A673 (cell line): ENCODE measurements at regions of chr12 and their contacts with region 1.

Region 1: DNA sequence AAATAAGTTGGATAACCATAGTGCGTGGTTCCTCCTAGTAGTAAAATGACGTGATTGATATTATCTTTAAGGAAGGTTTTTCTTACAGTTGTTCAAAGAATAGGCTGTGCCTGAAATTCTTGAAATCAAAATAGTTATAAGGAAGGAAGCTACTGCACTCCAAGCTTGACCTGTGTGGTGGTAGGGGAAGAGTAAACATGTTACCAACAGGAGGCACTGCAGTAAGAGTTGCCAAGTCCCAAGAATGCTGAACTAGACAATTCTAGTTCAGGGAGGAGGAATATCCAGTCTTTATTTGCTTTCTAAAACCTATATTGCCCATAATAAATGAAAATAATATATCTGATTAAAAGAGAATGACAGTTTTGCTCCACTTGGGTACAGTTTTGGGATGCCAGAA is 764.5 kb downstream of the TMTC2 start:
- DNase-seq: no peak
- H3K4me3 ChIP-seq: no peak overlapping the region
- H3K27ac ChIP-seq: no peak overlapping the region
- H3K4me1 ChIP-seq: no peaks in the 10 kb centered on the region
- H3K27me3 ChIP-seq: no peaks in the 10 kb centered on the region
- CTCF ChIP-seq: no peak

Region 2: DNA sequence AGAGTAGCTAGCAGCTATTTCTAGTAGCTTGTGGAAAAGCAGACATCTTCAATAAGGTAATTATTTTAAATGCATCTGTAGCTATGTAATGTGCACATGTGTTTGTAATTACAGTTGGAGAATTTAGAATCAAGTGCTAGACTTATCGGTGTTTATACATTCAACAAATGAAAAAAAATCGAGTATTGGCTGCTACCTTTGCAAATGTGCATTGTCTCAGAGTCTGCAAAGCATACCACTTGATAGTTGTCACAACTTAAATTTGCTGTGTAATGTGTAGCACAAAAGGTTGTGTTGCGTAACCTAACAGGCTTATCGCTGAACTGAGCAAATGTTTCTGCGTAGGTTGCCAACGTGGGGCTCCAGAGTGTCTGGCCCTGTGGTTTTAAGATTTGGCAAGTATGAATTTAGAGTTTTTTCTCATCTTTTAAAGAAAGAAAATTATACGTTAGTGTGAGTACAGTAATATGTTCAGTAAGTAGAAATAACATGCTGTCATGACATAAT is 720.2 kb before region 1 on chr12:
- CTCF ChIA-PET with region 1: no interaction called
- POLR2A ChIA-PET with region 1: interaction called, 14 read pairs
- intact Hi-C with region 1: no loop called
- DNase-seq: peak; percentile 82
- H3K4me3 ChIP-seq: no peak overlapping the region
- H3K27ac ChIP-seq: peak overlapping the region; percentile 21
- H3K4me1 ChIP-seq: peaks cover 23% of the 10 kb centered on the region
- H3K27me3 ChIP-seq: no peaks in the 10 kb centered on the region
- CTCF ChIP-seq: no peak

Region 3: GRCh38 chr12:83322809-83323208 is 128.4 kb before region 1 on chr12:
- CTCF ChIA-PET with region 1: no interaction called
- POLR2A ChIA-PET with region 1: no interaction called
- intact Hi-C with region 1: no loop called
- DNase-seq: peak; percentile 18
- H3K4me3 ChIP-seq: no peak overlapping the region
- H3K27ac ChIP-seq: no peak overlapping the region
- H3K4me1 ChIP-seq: no peaks in the 10 kb centered on the region
- H3K27me3 ChIP-seq: no peaks in the 10 kb centered on the region
- CTCF ChIP-seq: no peak

Region 4: GRCh38 chr12:83389237-83389996 is 61.8 kb before region 1 on chr12:
- CTCF ChIA-PET with region 1: no interaction called
- POLR2A ChIA-PET with region 1: no interaction called
- intact Hi-C with region 1: no loop called
- DNase-seq: peak; percentile 30
- H3K4me3 ChIP-seq: no peak overlapping the region
- H3K27ac ChIP-seq: no peak overlapping the region
- H3K4me1 ChIP-seq: no peaks in the 10 kb centered on the region
- H3K27me3 ChIP-seq: no peaks in the 10 kb centered on the region
- CTCF ChIP-seq: peak; percentile 45; the same call in 1 of the 2 replicates

Region 5: DNA sequence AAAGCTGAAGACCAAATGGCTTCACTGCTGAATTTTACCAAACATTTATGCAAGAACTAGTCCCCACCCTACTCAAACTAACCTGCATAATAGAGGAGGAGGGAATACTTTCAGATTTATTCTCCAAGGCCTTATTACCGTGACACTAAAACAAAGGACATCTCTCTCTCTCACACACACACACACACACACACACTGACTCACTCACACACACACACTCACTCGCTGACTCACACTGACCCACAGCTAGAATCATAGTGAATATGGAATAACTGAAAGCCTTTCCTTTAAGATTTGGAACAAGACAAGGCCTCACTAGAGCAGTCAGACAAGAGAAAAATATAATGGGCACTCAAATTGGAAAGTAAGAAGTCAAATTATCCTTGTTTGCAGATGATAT is 249.6 kb after region 1 on chr12:
- CTCF ChIA-PET with region 1: no interaction called
- POLR2A ChIA-PET with region 1: no interaction called
- intact Hi-C with region 1: no loop called
- DNase-seq: no peak
- H3K4me3 ChIP-seq: no peak overlapping the region
- H3K27ac ChIP-seq: no peak overlapping the region
- H3K4me1 ChIP-seq: no peaks in the 10 kb centered on the region
- H3K27me3 ChIP-seq: no peaks in the 10 kb centered on the region
- CTCF ChIP-seq: no peak